IMR-90 (cell line): ENCODE measurements at regions of chr7 and their contacts with region 1.

Region 1: GRCh38 chr7:31853380-31853779 is 166.4 kb downstream of the PPP1R17 start:
- DNase-seq: peak; percentile 35
- ATAC-seq: no peak
- H3K4me3 ChIP-seq: no peak overlapping the region
- H3K27ac ChIP-seq: no peak overlapping the region
- H3K4me1 ChIP-seq: peaks cover 1% of the 10 kb centered on the region; the same call in 1 of the 2 replicates
- H3K27me3 ChIP-seq: no peaks in the 10 kb centered on the region
- CTCF ChIP-seq: no peak
- POLR2A ChIP-seq: no peak
- RAD21 ChIP-seq: no peak

Region 2: GRCh38 chr7:31767686-31768358 is 85.6 kb before region 1 on chr7:
- CTCF ChIA-PET with region 1: no interaction called
- POLR2A ChIA-PET with region 1: no interaction called
- dilution Hi-C with region 1: no loop called
- in situ Hi-C with region 1: no loop called
- intact Hi-C with region 1: loop called (anchors 5 kb)
- DNase-seq: no peak
- ATAC-seq: no peak
- H3K4me3 ChIP-seq: no peak overlapping the region
- H3K27ac ChIP-seq: no peak overlapping the region
- H3K4me1 ChIP-seq: no peaks in the 10 kb centered on the region; the same call in 1 of the 2 replicates
- H3K27me3 ChIP-seq: no peaks in the 10 kb centered on the region
- CTCF ChIP-seq: no peak
- POLR2A ChIP-seq: no peak
- RAD21 ChIP-seq: no peak